PC-9 (cell line): ENCODE measurements at regions of chr2 and their contacts with region 1.

Region 1: DNA sequence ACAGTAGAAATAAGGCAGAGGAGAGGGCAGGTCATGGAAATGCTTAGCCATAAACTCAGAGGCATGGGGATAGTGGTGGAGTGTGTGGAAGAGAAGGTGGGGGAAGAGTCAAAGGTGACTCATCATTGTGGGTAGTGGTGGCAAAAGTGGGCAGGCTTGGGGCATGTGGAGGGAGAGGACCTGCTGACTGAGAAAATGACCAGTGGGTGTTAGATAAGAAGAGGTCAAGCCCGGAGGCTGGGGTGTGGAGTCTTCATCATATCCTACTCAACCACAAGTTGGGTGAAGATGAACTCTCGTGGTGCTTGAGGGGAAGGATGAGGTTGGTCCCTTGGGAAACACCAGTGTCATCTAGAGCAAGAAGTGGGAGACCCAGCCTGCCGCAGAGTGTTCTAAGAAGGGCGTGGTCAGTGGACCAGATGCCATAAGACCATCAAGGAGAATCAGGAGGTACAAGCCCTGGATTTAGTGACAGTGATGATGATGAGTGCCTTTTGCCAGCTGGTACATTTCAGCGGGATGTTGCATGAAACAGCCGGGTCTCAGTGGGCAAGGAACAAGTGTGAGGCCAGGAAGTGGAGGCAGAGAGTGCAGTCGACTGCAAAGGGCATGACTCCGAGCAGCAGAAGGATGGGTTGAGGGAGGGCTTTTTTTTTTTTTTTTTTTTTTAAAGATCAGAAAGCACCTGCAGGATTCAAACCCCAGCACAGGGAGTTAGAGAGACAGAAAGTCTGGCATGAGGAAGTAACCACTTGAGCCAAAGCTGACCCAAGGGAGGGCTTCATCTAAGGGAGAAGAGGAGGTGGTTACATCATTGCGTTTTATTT is 122.6 kb upstream of the SPRED2 start:
- DNase-seq: peak; percentile 69 to 85
- H3K4me3 ChIP-seq: no peak overlapping the region
- H3K27ac ChIP-seq: peak overlapping the region; percentile 31
- H3K4me1 ChIP-seq: peaks cover 25% of the 10 kb centered on the region
- H3K27me3 ChIP-seq: no peaks in the 10 kb centered on the region
- CTCF ChIP-seq: no peak

Region 2: DNA sequence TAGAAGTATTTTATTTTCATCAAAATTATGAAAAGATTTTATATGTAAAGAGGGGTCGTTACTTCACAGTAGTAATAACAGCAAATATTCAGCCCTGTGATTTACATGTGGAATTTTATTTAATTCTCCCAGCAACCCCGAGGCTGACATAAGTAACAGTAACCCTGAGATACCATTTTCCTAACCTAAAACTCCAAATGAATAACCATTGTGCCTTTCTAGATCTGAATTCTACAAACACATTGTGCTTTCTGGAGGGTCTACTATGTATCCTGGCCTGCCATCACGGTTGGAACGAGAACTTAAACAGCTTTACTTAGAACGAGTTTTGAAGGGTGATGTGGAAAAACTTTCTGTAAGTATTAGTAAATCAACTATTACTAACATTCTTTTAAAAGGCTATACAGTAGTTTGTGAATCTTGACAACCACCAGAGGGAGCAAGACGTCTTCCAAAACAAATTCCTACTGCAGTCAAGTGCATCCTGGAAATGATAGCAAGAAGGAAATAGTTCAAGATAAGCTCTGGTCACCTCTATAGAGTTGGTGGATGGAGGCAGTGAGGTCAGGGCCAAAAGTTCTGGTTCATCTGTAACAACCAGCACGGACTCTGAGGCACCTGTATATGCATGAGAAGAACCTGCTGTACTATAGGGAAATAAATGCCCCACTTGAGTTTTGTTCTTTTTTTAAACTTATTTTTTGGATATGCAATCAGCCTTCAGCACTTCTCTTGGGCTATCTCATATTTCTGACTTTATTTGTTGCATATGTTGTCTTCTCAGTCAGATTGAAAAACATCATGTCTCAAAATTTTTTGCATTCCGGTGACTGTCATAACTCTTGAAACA is 289.9 kb before region 1 on chr2:
- CTCF ChIA-PET with region 1: no interaction called
- POLR2A ChIA-PET with region 1: no interaction called
- intact Hi-C with region 1: loop called (anchors 1 kb)
- DNase-seq: peak; percentile 38 to 76
- H3K4me3 ChIP-seq: no peak overlapping the region
- H3K27ac ChIP-seq: no peak overlapping the region
- H3K4me1 ChIP-seq: peaks cover 9% of the 10 kb centered on the region; the same call in 1 of the 2 replicates
- H3K27me3 ChIP-seq: no peaks in the 10 kb centered on the region
- CTCF ChIP-seq: peak; percentile 92

Region 3: GRCh38 chr2:65366595-65367125 is 188.3 kb before region 1 on chr2:
- CTCF ChIA-PET with region 1: no interaction called
- POLR2A ChIA-PET with region 1: no interaction called
- intact Hi-C with region 1: loop called (anchors 2 kb)
- DNase-seq: peak; percentile 57 to 96
- H3K4me3 ChIP-seq: peak overlapping the region; percentile 48; the same call in 1 of the 2 replicates
- H3K27ac ChIP-seq: peak overlapping the region; percentile 76
- H3K4me1 ChIP-seq: peaks cover 49% of the 10 kb centered on the region
- H3K27me3 ChIP-seq: no peaks in the 10 kb centered on the region
- CTCF ChIP-seq: no peak

Region 4: DNA sequence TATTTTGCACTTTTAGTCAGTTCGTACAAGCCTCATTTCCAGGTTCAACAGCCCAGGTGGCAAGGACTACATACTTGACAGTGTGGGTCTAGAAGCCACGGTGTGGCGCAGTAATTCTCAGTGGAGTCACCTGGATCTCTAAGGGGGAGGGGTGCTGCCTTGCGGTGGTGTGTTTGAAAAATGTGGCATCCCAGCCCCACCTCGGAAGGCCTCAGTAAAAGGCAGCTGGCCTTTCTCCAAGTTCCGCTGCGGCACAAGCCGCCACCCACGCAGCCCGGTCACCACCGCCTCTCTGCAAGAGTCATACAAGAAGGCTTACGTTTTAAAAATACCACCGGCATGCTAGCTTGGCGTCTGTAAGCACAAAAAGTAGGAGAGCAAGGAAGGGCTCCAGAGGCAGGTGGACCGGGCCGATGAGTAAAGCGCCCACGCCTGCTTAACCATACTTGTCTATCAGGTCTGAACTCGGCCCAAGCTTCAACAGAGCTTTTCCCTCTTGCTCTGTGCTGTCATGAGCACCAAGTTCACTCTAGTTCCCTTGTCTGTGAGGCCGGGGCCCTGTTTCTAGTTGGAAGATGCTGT is 172.1 kb before region 1 on chr2:
- CTCF ChIA-PET with region 1: no interaction called
- POLR2A ChIA-PET with region 1: no interaction called
- intact Hi-C with region 1: loop called (anchors 1 kb)
- DNase-seq: peak; percentile 97 to 98
- H3K4me3 ChIP-seq: peak overlapping the region; percentile 15; the same call in 1 of the 2 replicates
- H3K27ac ChIP-seq: peak overlapping the region; percentile 82
- H3K4me1 ChIP-seq: peaks cover 78% of the 10 kb centered on the region
- H3K27me3 ChIP-seq: no peaks in the 10 kb centered on the region
- CTCF ChIP-seq: peak; percentile 38; the same call in 1 of the 2 replicates

Region 5: DNA sequence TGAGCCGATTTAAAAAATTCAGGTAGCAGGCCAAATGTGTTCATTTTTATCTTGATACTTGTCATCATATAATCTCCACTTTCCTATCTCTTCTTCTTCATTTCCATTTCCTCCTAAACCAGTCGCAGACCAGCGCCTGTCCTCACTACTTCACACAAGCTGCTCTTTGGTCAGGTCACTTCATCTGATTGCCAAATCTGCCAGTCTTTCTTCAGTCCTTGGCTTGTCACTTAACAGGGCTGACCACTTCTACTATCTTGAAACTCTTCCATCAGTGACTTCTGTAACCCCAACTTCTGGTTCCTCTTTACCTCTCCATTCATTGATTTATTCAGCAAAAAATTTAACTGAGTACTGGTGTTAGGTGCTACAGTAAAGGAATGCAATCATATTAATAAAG is 104.6 kb before region 1 on chr2:
- CTCF ChIA-PET with region 1: no interaction called
- POLR2A ChIA-PET with region 1: no interaction called
- intact Hi-C with region 1: loop called (anchors 1 kb)
- DNase-seq: no peak
- H3K4me3 ChIP-seq: no peak overlapping the region
- H3K27ac ChIP-seq: no peak overlapping the region
- H3K4me1 ChIP-seq: peaks cover 52% of the 10 kb centered on the region
- H3K27me3 ChIP-seq: no peaks in the 10 kb centered on the region
- CTCF ChIP-seq: no peak

Region 6: DNA sequence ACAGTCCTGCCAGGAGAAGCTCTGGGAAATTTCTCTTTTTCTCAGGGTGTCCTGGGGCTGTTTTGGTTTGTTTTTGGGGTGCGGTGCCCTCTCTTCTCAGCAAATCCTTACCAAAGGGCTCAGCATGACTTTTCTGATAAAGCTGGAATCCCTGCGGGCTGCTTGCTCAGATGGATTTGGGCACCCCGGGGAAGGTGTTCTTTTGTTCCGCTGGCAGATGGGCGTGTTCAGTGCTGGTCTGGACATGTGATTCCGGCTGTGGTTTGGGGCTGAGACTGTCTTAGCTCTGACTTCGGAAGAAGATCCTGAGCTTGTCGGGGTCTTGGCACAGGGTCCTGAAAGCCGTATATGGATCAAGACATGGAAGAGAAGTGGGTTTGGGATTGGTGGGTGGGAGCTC is 11.6 kb after region 1 on chr2:
- CTCF ChIA-PET with region 1: no interaction called
- POLR2A ChIA-PET with region 1: no interaction called
- intact Hi-C with region 1: no loop called
- DNase-seq: peak; percentile 21 to 54
- H3K4me3 ChIP-seq: peak overlapping the region; percentile 24; the same call in 1 of the 2 replicates
- H3K27ac ChIP-seq: 0 out of 2 replicates have a peak overlapping the region, but pooled peaks have one; percentile 31
- H3K4me1 ChIP-seq: peaks cover 10% of the 10 kb centered on the region; the same call in 1 of the 2 replicates
- H3K27me3 ChIP-seq: no peaks in the 10 kb centered on the region
- CTCF ChIP-seq: no peak

Region 7: GRCh38 chr2:65595641-65596040 is 40.7 kb after region 1 on chr2:
- CTCF ChIA-PET with region 1: no interaction called
- POLR2A ChIA-PET with region 1: no interaction called
- intact Hi-C with region 1: no loop called
- DNase-seq: no peak
- H3K4me3 ChIP-seq: no peak overlapping the region
- H3K27ac ChIP-seq: no peak overlapping the region
- H3K4me1 ChIP-seq: peaks cover 12% of the 10 kb centered on the region; the same call in 1 of the 2 replicates
- H3K27me3 ChIP-seq: no peaks in the 10 kb centered on the region
- CTCF ChIP-seq: no peak